ENCODE measurements at regions of chr6 and their contacts with region 1.

Region 1: GRCh38 chr6:134730013-134730412 is 219.9 kb downstream of the ALDH8A1 start:
- DNase-seq: no peak
- ATAC-seq: no peak
- H3K4me3 ChIP-seq: no peak overlapping the region
- H3K27ac ChIP-seq: no peak overlapping the region
- H3K4me1 ChIP-seq: peaks cover 0 to 7% (median under 1%) of the 10 kb centered on the region in 12 donors
- H3K27me3 ChIP-seq: no peaks in the 10 kb centered on the region
- CTCF ChIP-seq: no peak
- POLR2A ChIP-seq: no peak

Region 2: DNA sequence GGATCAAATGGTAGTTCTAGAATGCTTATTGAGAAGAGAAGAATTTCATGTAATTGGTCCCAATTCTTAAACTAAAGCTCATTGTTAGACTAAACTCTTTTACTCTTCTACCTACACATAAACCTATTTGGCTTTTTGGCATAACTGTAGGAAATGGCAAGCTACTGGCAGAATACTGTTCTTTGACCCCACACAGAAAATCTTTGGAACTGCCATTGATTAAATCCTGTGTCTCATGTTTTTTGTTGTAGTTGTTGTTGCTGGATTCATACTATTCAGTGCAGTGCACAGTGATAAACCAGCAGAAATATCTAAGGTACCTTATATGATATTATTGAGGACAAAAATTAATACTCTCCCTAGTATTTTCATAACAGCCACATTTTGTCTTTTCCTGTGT is 170.0 kb before region 1 on chr6:
- intact Hi-C with region 1: no loop called
- DNase-seq: no peak
- ATAC-seq: no peak
- H3K4me3 ChIP-seq: no peak overlapping the region
- H3K27ac ChIP-seq: no peak overlapping the region
- H3K4me1 ChIP-seq: no peaks in the 10 kb centered on the region
- H3K27me3 ChIP-seq: no peaks in the 10 kb centered on the region
- CTCF ChIP-seq: no peak
- POLR2A ChIP-seq: no peak

Region 3: GRCh38 chr6:134678436-134678889 is 51.5 kb before region 1 on chr6:
- intact Hi-C with region 1: loop called in 1 of 10 experiments (anchors 5 kb)
- DNase-seq: peak in 4 of 5 donors; percentile 58 to 76 (median 62)
- ATAC-seq: peak in 3 of 4 donors; percentile 72 to 82 (median 80)
- H3K4me3 ChIP-seq: no peak overlapping the region
- H3K27ac ChIP-seq: peak overlapping the region in 1 of 12 donors; percentile 4
- H3K4me1 ChIP-seq: peaks cover 0 to 13% (median 6%) of the 10 kb centered on the region in 12 donors
- H3K27me3 ChIP-seq: no peaks in the 10 kb centered on the region
- CTCF ChIP-seq: no peak
- POLR2A ChIP-seq: no peak

Region 4: GRCh38 chr6:134689641-134690040 is 40.4 kb before region 1 on chr6:
- intact Hi-C with region 1: no loop called
- DNase-seq: peak in 4 of 5 donors; percentile 52 to 75 (median 66)
- ATAC-seq: peak; percentile 93 to 96 (median 94)
- H3K4me3 ChIP-seq: peak overlapping the region in 5 of 12 donors; percentile 19 to 48 (median 44)
- H3K27ac ChIP-seq: peak overlapping the region in 10 of 12 donors; percentile 62 to 87 (median 76)
- H3K4me1 ChIP-seq: peaks cover 0 to 11% (median 5%) of the 10 kb centered on the region in 12 donors
- H3K27me3 ChIP-seq: no peaks in the 10 kb centered on the region
- CTCF ChIP-seq: no peak
- POLR2A ChIP-seq: no peak

Region 5: GRCh38 chr6:134757911-134758361 is 27.9 kb after region 1 on chr6:
- intact Hi-C with region 1: loop called in 1 of 10 experiments (anchors 1 kb)
- DNase-seq: no peak
- ATAC-seq: no peak
- H3K4me3 ChIP-seq: no peak overlapping the region
- H3K27ac ChIP-seq: no peak overlapping the region
- H3K4me1 ChIP-seq: no peaks in the 10 kb centered on the region
- H3K27me3 ChIP-seq: no peaks in the 10 kb centered on the region
- CTCF ChIP-seq: no peak
- POLR2A ChIP-seq: no peak